IMR-90 (cell line): ENCODE measurements at regions of chr1 and their contacts with region 1.

Region 1: DNA sequence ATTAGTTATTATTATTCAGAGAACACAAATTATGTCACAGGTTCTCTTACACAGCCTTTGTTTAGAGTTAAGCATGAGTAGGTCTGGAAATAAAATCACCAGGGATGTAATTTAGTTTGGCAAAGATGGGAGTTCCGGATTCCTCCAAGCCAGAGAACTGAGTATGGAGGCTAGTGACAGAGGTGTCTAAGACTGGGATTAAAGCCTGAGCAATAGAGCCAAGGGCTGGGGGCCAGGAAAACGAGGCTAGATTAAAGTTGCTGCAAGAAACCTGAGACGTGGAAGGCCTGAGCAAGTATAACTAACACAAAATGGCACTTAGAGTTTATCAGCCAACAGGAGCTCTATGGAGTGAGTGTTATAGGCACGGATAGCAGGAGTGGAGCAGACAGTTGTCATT is 381.6 kb downstream of the SRGAP2C start:
- DNase-seq: no peak
- ATAC-seq: no peak
- H3K4me3 ChIP-seq: no peak overlapping the region
- H3K27ac ChIP-seq: no peak overlapping the region
- H3K4me1 ChIP-seq: no peaks in the 10 kb centered on the region
- H3K27me3 ChIP-seq: no peaks in the 10 kb centered on the region
- CTCF ChIP-seq: no peak
- POLR2A ChIP-seq: no peak
- RAD21 ChIP-seq: no peak

Region 2: DNA sequence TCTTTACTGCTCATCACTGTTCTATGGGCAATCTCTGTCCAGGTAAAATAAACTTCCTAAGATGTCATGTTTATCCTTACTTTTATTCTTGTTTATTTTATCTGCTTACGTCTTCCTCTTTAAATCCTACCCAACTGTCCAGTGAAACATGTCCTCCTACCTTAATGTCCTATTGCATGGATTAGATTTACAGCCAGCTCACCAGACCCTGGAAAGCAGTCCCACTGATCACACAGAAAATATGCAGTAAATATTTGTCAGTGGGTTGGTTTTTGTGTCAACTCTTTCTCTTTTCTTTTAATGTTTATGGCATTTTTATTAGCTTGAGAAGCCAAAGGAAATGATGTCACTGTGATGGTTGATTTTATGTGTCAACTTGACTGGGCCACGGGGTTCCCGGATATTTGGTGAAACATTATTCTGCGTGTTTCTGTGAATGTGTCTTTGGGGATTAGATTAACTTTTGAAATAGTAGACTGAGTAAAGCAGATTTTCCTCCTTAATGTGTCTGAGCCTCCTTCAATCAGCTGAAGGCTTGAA is 123.3 kb before region 1 on chr1:
- CTCF ChIA-PET with region 1: no interaction called
- POLR2A ChIA-PET with region 1: no interaction called
- dilution Hi-C with region 1: no loop called
- in situ Hi-C with region 1: no loop called
- intact Hi-C with region 1: loop called (anchors 10 kb)
- DNase-seq: peak; percentile 7
- ATAC-seq: 0 out of 2 replicates have a peak, but pooled peaks have one; percentile 17
- H3K4me3 ChIP-seq: no peak overlapping the region
- H3K27ac ChIP-seq: no peak overlapping the region
- H3K4me1 ChIP-seq: no peaks in the 10 kb centered on the region
- H3K27me3 ChIP-seq: peaks cover 2% of the 10 kb centered on the region
- CTCF ChIP-seq: no peak
- POLR2A ChIP-seq: no peak
- RAD21 ChIP-seq: no peak

Region 3: GRCh38 chr1:121516234-121516967 is 49.9 kb before region 1 on chr1:
- CTCF ChIA-PET with region 1: no interaction called
- POLR2A ChIA-PET with region 1: no interaction called
- dilution Hi-C with region 1: no loop called
- in situ Hi-C with region 1: no loop called
- intact Hi-C with region 1: no loop called
- DNase-seq: no peak
- ATAC-seq: no peak
- H3K4me3 ChIP-seq: no peak overlapping the region
- H3K27ac ChIP-seq: no peak overlapping the region
- H3K4me1 ChIP-seq: no peaks in the 10 kb centered on the region
- H3K27me3 ChIP-seq: peaks cover 26% of the 10 kb centered on the region
- CTCF ChIP-seq: no peak
- POLR2A ChIP-seq: no peak
- RAD21 ChIP-seq: no peak

Region 4: GRCh38 chr1:121586369-121587229 is 20.3 kb after region 1 on chr1:
- CTCF ChIA-PET with region 1: no interaction called
- POLR2A ChIA-PET with region 1: no interaction called
- dilution Hi-C with region 1: no loop called
- in situ Hi-C with region 1: no loop called
- intact Hi-C with region 1: loop called (anchors 2 kb)
- DNase-seq: no peak
- ATAC-seq: peak; percentile 24; the same call in 1 of the 2 replicates
- H3K4me3 ChIP-seq: no peak overlapping the region
- H3K27ac ChIP-seq: no peak overlapping the region
- H3K4me1 ChIP-seq: no peaks in the 10 kb centered on the region
- H3K27me3 ChIP-seq: no peaks in the 10 kb centered on the region
- CTCF ChIP-seq: no peak
- POLR2A ChIP-seq: no peak
- RAD21 ChIP-seq: no peak